Activated CD4-positive, alpha-beta T cell treated with anti-CD3 and anti-CD28 coated beads for 36 hours (primary cell): ENCODE measurements at regions of chr9 and their contacts with region 1.

Region 1: DNA sequence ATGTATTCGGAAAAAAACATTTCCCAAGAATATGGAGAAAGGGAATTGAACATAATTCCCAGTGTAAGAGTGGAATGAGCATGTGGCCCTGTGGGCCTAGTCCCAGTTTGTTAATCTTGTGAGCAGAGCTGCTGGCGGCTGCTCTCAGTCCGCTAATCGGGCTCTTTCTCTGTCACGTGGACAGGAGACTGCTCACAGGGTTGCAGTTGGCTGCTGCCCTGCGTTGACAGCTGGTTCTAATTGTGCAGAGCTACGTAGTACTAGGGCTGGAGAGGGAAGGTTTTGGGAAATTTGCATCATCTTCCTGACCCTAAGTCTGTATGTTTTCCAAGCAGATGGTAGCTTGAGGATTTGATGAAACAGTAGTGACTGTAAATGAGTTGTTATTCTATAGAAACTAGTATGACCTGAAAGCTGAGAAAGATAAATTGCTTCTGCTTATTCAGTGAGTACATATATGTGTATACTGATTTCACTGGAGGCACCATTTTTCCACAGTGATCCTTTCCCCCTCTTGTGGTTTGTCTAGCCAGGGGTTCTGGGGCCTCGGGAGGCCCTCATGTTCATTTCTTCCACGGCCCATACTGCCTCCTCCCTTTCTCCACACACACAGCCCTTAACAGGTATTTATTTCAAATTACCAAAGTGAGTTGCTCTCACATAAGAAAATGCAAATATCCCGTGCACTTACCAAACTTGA is 100.6 kb downstream of the ANGPTL2 start:
- DNase-seq: no peak
- ATAC-seq: no peak
- H3K4me3 Mint-ChIP-seq: no peak overlapping the region
- H3K27ac Mint-ChIP-seq: no peak overlapping the region
- H3K4me1 Mint-ChIP-seq: no peaks in the 10 kb centered on the region
- H3K27me3 Mint-ChIP-seq: peaks cover 15% of the 10 kb centered on the region

Region 2: DNA sequence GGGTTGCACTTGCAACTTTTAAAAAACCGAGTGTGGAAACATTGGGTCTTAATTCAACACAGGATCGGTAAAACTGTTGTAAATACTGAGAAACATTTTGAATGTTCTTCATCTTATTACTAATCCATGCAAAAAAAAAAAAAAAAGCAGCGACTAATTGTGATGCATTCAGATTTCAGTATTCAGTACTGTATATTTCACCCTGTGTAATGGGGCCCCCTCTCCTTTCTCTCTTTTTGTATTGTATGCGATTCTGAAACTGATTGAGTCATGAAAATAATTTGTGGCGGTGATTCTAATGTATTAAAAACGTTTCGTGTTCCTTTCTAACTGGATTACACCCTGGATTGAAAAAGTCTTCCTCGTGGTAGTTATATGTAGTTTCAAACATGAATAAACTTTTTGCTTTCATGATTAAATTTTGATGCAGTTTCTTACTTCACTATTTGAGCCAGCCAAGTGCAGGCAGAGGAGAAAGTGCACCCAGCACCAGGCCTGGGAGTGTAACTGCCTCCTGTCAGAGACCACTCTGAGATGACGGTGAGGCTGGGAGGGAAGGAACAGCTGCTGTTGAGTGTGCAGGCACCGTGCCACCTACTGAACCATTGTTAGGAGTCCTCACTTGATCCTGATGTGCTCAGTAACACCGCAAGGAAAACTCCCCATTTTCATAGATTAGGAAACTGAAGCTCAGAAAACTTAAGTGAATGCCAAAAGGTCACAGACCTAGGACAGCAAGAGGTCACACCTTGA is 1054.7 kb before region 1 on chr9:
- CTCF ChIA-PET with region 1: no interaction called
- POLR2A ChIA-PET with region 1: no interaction called
- intact Hi-C with region 1: no loop called
- DNase-seq: peak; percentile 9
- ATAC-seq: peak; percentile 82
- H3K4me3 Mint-ChIP-seq: no peak overlapping the region
- H3K27ac Mint-ChIP-seq: no peak overlapping the region
- H3K4me1 Mint-ChIP-seq: peaks cover 11% of the 10 kb centered on the region
- H3K27me3 Mint-ChIP-seq: no peaks in the 10 kb centered on the region

Region 3: GRCh38 chr9:126927419-126927818 is 94.4 kb before region 1 on chr9:
- CTCF ChIA-PET with region 1: no interaction called
- POLR2A ChIA-PET with region 1: interaction called, 12 read pairs
- intact Hi-C with region 1: no loop called
- DNase-seq: no peak
- ATAC-seq: no peak
- H3K4me3 Mint-ChIP-seq: no peak overlapping the region
- H3K27ac Mint-ChIP-seq: no peak overlapping the region
- H3K4me1 Mint-ChIP-seq: no peaks in the 10 kb centered on the region
- H3K27me3 Mint-ChIP-seq: peaks cover 2% of the 10 kb centered on the region